ENCODE measurements at regions of chr11 and their contacts with region 1.

Region 1: DNA sequence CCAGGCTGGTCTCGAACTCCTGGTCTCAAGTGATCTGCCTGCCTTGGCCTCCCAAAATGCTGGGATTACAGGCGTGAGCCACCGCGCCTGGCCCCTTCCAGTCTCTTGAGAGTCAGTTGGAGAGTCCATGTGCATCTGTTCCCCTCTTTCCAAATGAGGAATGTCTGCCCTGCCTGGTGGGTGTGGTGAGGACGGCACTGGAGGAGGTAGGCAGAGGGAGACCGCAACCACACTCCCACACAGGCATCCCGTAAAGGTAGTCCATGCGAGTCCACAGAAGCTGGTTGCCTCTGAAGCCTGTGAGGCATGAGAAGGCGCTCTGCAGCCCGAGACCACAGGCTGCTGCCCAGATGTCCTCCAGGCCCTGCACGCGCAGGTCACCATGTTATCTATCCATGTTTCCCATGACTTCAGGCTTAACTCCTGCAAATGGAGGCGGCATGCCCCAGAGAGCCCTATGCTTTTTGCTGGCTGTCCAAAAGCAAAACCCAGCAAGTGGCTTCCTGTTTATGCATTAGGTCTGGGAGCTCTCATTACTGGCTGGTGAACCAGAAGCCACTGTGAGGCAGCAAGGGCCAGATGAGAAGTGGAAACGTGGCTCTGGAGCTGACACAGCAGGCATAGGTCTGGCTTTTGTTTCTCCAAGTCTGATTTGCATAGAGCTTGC is 43.4 kb downstream of the GRIK4 start:
- DNase-seq: no peak
- ATAC-seq: peak; percentile 28 to 64 (median 58)
- H3K4me3 ChIP-seq: no peak overlapping the region
- H3K27ac ChIP-seq: no peak overlapping the region
- H3K4me1 ChIP-seq: no peaks in the 10 kb centered on the region
- H3K27me3 ChIP-seq: no peaks in the 10 kb centered on the region
- CTCF ChIP-seq: no peak
- POLR2A ChIP-seq: no peak

Region 2: GRCh38 chr11:120608760-120609211 is 53.9 kb after region 1 on chr11:
- intact Hi-C with region 1: loop called in 1 of 2 experiments (anchors 10 kb)
- DNase-seq: peak in 1 of 3 donors; percentile 49
- ATAC-seq: peak; percentile 68 to 87 (median 76)
- H3K4me3 ChIP-seq: no peak overlapping the region
- H3K27ac ChIP-seq: no peak overlapping the region
- H3K4me1 ChIP-seq: peaks cover 0 to 9% (median 0%) of the 10 kb centered on the region in 4 donors
- H3K27me3 ChIP-seq: no peaks in the 10 kb centered on the region
- CTCF ChIP-seq: no peak
- POLR2A ChIP-seq: no peak

Measured in right lobe of liver (tissue), 6 donors.